ENCODE measurements at regions of chr9 and their contacts with region 1.

Region 1: DNA sequence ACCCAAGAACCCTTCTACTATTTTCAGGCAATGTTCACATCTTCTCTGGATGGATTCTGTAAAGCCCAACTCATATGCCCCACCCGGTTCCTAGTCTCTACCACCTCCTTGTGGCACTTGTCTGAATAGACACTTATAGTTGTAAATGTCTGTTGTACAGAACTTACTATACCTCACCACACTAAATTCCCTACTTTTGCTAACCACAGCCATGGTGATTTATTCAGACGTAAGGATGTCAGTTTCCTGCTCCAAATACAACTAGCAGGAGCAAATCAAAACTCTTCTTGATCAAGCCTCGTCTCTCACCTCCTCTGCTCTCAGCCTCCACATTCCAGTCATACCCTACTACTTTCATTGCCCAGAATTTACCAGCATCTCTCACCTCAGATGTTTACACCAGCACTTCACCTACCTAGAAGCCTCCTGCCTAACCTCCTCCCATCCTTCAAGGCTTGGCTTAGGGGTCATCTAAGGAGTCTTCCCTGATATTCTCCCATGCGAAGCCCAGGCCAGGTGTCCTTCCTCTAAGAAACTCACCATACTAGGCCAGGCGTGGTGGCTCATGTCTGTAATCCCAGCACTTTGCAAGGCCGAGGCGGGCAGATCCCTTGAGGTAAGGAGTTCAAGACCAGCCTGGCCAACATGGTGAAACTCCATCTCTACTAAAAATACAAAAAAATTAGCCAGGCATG is 75.5 kb downstream of the MAPKAP1 start:
- DNase-seq: peak; percentile 59
- ATAC-seq: peak; percentile 51
- H3K4me3 Mint-ChIP-seq: no peak overlapping the region
- H3K27ac Mint-ChIP-seq: peak overlapping the region; percentile 26
- H3K4me1 Mint-ChIP-seq: peaks cover 83% of the 10 kb centered on the region
- H3K27me3 Mint-ChIP-seq: no peaks in the 10 kb centered on the region

Region 2: GRCh38 chr9:125407974-125408900 is 223.3 kb before region 1 on chr9:
- CTCF ChIA-PET with region 1: interaction called, 7 read pairs
- POLR2A ChIA-PET with region 1: no interaction called
- intact Hi-C with region 1: loop called (anchors 2 to 5 kb)
- DNase-seq: peak; percentile 89
- ATAC-seq: peak; percentile 76
- H3K4me3 Mint-ChIP-seq: peak overlapping the region; percentile 62
- H3K27ac Mint-ChIP-seq: no peak overlapping the region
- H3K4me1 Mint-ChIP-seq: peaks cover 13% of the 10 kb centered on the region
- H3K27me3 Mint-ChIP-seq: peaks cover 27% of the 10 kb centered on the region

Region 3: DNA sequence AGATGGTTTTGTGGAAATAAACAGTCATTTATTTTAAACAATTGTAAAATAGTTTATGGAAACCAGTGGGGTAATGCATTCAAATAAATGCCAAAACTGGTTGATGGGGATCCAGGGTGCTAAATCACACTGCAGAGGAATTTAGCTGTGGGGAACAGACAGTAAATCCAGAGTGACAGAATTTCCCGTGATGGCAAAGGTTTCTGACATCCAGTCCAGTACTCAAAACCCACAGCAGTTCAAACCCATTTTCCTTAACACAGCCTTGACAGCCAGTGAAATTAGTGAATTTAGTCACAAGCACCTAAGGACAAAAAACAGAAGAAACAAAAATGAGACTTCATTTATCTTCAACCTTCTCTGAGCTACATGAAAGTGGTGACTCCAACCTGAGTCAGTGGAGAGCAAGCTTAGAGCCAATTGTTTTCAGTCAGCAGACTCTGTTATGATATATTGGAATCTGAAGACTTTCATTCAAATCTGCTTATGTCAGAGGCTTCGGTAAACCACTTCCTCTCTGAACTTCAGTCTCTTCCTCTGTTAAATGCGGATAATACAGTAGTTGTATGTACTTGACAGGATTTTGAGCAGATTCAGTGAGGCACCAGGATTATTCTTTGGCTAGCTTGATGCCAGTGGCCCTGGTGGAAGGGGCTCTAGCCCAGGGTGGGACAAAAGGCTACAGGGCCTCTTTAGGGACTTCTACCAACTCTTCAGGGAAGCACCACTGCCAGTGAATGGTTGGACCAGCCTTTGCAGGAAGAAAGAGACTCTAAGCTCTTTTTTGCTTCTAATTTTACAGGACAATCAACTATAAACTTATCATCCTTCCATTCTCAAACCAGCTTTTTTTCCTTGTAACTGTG is 109.8 kb before region 1 on chr9:
- CTCF ChIA-PET with region 1: interaction called, 6 read pairs
- POLR2A ChIA-PET with region 1: no interaction called
- intact Hi-C with region 1: loop called (anchors 1 kb)
- DNase-seq: peak; percentile 63
- ATAC-seq: peak; percentile 97
- H3K4me3 Mint-ChIP-seq: peak overlapping the region; percentile 27
- H3K27ac Mint-ChIP-seq: peak overlapping the region; percentile 86
- H3K4me1 Mint-ChIP-seq: peaks cover 44% of the 10 kb centered on the region
- H3K27me3 Mint-ChIP-seq: no peaks in the 10 kb centered on the region

Region 4: DNA sequence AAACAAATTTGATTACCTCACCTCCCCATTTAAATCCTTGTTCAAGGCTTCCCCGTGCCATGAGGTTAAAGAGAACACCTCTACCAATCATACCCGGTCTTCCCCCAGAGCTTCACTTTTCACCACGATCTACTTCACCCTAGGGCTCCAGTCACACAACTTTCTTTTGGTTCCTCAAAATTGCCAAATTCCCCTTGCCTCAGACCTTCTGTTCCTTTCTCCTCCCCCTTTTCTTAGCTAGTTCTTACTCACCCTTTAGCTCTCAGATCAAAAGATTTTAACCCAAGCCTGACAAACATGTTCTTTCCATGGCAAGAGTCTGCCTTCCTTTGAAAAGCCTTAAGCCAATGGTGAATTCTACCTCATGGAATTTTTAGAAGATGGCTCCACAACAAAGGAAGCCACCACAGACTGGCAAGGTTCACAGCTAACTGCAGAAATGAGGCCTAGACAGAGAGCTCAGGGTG is 18.8 kb after region 1 on chr9:
- CTCF ChIA-PET with region 1: interaction called, 5 read pairs
- POLR2A ChIA-PET with region 1: interaction called, 5 read pairs
- intact Hi-C with region 1: loop called (anchors 1 kb)
- DNase-seq: peak; percentile 39
- ATAC-seq: peak; percentile 89
- H3K4me3 Mint-ChIP-seq: peak overlapping the region; percentile 55
- H3K27ac Mint-ChIP-seq: peak overlapping the region; percentile 87
- H3K4me1 Mint-ChIP-seq: peaks cover 71% of the 10 kb centered on the region
- H3K27me3 Mint-ChIP-seq: no peaks in the 10 kb centered on the region

Region 5: GRCh38 chr9:125700791-125701190 is 69.3 kb after region 1 on chr9:
- CTCF ChIA-PET with region 1: no interaction called
- POLR2A ChIA-PET with region 1: no interaction called
- intact Hi-C with region 1: loop called (anchors 1 kb)
- DNase-seq: peak; percentile 70
- ATAC-seq: peak; percentile 91
- H3K4me3 Mint-ChIP-seq: no peak overlapping the region
- H3K27ac Mint-ChIP-seq: no peak overlapping the region
- H3K4me1 Mint-ChIP-seq: peaks cover 65% of the 10 kb centered on the region
- H3K27me3 Mint-ChIP-seq: no peaks in the 10 kb centered on the region

Region 6: DNA sequence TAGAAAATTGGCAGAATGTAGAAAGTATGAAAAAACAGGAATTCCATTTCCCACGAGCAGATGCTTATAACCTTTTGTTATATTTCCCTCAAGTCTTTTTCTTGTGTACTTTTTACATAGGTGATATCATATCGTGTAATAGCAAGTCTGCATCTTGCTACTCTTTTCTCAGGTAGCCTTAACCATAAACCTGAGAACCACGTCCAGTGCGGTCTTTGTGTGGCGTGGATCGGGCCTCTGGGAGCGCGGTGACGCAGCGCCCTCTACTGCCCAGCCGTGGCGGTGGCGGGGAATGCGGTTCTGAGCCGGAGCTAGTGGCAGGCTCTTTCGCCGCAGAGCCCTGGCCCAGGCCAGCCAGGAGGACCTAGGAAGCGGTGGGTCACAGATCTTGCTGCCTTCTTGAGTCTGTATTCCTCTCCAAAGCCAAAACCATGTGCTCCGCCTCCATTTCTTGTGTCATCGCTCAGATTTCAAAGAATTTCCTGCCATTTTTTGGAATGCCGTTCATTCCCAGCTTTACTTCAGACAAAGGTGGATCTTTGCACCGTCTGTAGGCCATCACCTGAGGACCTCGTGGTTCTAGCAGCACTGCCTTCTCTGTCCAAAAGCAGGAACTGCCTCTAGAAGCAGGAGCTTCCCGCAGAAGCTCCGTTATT is 767.0 kb after region 1 on chr9:
- CTCF ChIA-PET with region 1: no interaction called
- POLR2A ChIA-PET with region 1: no interaction called
- intact Hi-C with region 1: loop called in 1 of 2 experiments (anchors 10 kb)
- DNase-seq: peak; percentile 86
- ATAC-seq: peak; percentile 30
- H3K4me3 Mint-ChIP-seq: no peak overlapping the region
- H3K27ac Mint-ChIP-seq: no peak overlapping the region
- H3K4me1 Mint-ChIP-seq: peaks cover 48% of the 10 kb centered on the region
- H3K27me3 Mint-ChIP-seq: no peaks in the 10 kb centered on the region

Measured in activated CD4-positive, alpha-beta T cell treated with anti-CD3 and anti-CD28 coated beads for 36 hours (primary cell).